Testis (tissue), 5 donors: ENCODE measurements at regions of chr6 and their contacts with region 1.

Region 1: DNA sequence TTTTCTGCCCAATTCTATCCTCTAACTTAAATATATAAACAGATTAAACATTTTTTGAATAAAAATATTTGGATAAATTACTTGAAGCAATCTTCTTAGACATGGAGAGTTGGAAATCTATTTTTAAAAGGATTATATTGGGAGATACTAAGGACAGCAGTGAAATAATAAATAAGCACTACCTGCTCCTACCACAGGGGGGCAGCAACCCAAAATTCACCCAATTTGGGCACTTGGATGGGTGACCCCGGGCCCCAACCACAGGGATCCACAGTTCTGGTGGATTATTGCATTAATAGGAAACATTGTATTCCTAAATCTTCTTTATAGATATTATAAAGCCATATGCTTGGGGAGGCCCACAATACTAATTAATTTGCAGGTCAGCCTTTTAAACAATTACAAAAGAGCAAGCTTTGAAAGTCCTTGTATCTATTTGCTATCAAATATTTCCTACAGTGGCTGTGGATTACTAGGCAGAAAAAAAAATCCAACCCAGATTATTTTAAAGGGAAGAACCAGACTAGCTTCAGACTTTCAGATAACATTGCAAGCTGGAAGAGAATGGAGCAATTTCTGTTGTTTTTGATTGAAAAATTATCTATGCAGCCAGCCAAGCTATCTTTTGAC is 66.4 kb upstream of the PDE10A start:
- DNase-seq: peak; percentile 68
- H3K4me3 ChIP-seq: no peak overlapping the region
- H3K27ac ChIP-seq: no peak overlapping the region
- H3K4me1 ChIP-seq: peaks cover 3% of the 10 kb centered on the region
- H3K27me3 ChIP-seq: no peaks in the 10 kb centered on the region
- CTCF ChIP-seq: peak; percentile 57 to 85 (median 68)
- POLR2A ChIP-seq: no peak

Region 2: DNA sequence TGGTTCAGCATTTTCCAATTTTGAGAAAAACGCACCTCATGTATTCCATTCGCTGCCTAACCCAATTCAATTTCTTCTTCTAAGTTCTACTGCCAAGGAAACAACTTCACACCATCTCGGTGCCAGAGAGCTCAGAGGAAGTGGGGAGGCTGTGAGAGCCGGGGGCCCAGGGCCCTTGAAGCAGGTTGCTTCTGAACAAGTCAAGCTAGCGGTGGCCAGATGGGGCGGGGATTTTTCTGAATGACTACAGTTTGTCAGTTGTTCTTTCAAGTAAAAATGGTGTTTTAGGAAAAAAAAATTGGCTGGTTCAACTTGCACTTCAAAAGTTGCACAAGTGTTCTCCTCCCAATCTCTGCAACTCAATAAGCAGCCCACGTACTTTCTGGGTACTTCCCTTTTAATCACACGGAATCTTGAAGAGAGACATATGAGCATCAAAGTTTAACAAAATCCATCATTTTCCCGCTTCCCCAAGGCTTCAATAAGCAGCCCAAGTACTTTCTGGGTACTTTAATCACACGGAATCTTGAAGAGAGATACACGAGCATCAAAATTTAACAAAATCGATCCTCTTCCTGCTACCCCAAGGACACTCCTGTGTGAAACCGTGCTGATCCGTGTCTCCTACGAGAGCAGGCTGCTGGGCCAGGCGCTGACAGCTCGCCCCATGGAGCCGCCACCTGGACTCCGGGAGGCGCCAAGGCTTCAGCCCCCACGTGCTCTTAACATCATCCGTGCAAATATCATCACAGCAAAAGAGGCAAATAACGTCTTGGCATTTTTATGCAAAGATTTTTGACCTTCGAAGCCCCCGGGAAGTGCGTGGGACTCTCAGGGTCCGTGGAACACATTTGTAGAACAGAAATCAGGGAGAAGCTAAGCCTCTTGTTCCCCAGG is 120.4 kb after region 1 on chr6:
- intact Hi-C with region 1: loop called (anchors 10 kb)
- DNase-seq: peak; percentile 38
- H3K4me3 ChIP-seq: peak overlapping the region in 1 of 2 donors; percentile 8
- H3K27ac ChIP-seq: no peak overlapping the region
- H3K4me1 ChIP-seq: peaks cover 4% of the 10 kb centered on the region
- H3K27me3 ChIP-seq: no peaks in the 10 kb centered on the region
- CTCF ChIP-seq: no peak
- POLR2A ChIP-seq: no peak